CD8-positive, alpha-beta T cell (primary cell): ENCODE measurements at regions of chr13 and their contacts with region 1.

Region 1: DNA sequence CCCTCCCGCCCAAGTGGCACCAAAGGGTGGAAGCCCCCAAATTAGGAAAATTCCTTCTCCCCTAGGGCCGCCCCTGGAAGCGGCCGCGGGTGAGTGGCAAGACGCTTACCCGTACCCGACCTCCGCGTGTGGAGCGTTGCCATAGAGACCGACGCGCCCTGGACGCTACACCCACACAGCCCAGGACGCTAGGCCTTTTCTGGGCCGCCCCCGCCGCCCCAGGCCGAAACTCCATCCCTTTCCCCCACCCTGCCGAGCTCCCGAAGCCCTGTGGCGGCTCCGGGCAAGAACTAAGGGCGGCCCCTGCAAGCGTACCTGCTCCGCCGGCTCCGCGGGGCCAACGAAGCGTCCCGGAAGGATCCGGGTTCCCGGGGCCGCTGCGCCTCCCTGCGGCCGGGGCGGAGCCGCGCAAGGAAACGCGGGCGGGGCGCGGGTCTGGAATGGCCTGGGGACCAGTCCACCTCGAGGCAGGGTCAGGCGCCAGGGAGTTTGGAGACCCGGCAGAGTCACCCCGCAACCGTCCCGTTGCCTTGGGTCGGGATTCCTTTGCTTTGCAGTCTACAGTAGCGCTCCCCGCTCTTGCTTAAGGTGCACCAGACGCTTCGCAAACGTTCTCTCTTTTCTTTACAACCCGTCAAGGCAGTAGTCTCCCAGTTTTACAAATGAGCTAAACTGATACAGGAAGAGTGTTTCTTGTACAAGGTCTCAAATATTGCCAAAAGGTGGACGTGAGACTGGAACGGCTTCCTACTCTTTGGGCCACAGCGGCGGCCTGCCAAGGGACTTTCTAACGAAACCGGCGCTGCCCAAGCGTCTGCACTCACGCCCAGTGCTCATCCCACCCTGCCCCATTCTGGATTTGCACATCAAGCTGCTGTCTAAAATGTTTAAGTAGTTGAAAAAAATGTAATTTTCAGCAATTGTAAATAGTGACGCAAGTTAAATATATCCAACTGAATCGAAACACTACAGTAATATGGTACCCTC is at the start of gene NEK5:
- DNase-seq: peak; percentile 6 to 69 (median 48)
- ATAC-seq: peak; percentile 83
- H3K4me3 ChIP-seq: peak within 1 kb of the TSS; percentile 62 to 66
- H3K4me3 Mint-ChIP-seq: peak within 1 kb of the TSS; percentile 83
- H3K27ac ChIP-seq: no peak within 1 kb of the TSS
- H3K27ac Mint-ChIP-seq: no peak within 1 kb of the TSS
- H3K4me1 ChIP-seq: peaks cover 16% of the 10 kb centered on the region
- H3K4me1 Mint-ChIP-seq: peaks cover 16% of the 10 kb centered on the region
- H3K27me3 ChIP-seq: peaks cover 5 to 11% of the 10 kb centered on the region in 2 experiments
- H3K27me3 Mint-ChIP-seq: peaks cover 16% of the 10 kb centered on the region
- CTCF ChIP-seq: peak; percentile 46
- total RNA-seq, gene NEK5: not detected

Region 2: GRCh38 chr13:51125498-51126226 is 1003.3 kb before region 1 on chr13:
- CTCF ChIA-PET with region 1: no interaction called
- POLR2A ChIA-PET with region 1: no interaction called
- intact Hi-C with region 1: loop called in 1 of 2 experiments (anchors 1 kb)
- DNase-seq: peak in 4 of 9 experiments; percentile 23 to 60 (median 39)
- ATAC-seq: peak; percentile 57
- H3K4me3 ChIP-seq: no peak overlapping the region
- H3K4me3 Mint-ChIP-seq: no peak overlapping the region
- H3K27ac ChIP-seq: no peak overlapping the region
- H3K27ac Mint-ChIP-seq: no peak overlapping the region
- H3K4me1 ChIP-seq: no peaks in the 10 kb centered on the region
- H3K4me1 Mint-ChIP-seq: peaks cover 3% of the 10 kb centered on the region
- H3K27me3 ChIP-seq: no peaks in the 10 kb centered on the region
- H3K27me3 Mint-ChIP-seq: peaks cover 14% of the 10 kb centered on the region
- CTCF ChIP-seq: peak; percentile 48

Region 3: DNA sequence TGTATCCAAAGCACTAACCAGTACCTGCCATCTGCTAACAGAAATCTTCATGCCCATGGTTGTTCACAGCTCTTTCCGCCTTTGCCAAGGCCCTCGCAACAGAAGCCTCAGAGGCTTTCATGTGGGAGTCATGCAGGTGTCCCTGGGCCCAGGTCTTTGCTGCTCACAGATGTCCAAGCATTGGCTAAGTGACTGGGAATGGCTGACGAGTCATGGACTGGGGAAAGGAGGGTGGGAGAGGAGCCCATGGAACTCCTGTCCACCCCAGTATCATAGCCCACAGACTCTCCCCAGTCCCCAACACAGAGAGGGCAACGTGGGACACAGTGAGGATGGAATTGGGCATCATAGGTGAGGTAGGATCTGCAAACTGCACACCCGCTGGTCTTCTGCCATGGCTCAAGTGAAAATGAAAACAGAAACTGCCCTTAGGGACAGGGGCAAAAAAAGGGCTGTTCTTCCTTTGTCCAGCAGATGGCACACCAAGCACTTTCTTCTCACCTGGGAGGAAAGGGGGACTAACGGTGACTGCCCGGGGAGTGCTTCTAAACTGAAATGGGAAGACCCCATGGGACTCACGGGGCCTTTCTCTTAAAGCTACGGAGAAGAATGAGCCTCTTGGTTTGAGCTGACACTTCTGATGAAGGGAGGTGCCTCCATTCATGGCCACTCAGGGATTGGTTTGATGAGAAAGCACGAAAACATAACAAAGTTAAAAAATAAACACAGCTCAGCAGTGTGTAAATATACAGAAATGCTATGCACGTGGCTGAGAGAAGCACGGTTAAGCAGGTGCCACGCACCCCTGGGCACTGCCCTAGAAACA is 314.0 kb before region 1 on chr13:
- CTCF ChIA-PET with region 1: interaction called, 4 read pairs
- POLR2A ChIA-PET with region 1: no interaction called
- intact Hi-C with region 1: loop called (anchors 2 kb)
- DNase-seq: peak; percentile 49 to 89 (median 76)
- ATAC-seq: peak; percentile 82
- H3K4me3 ChIP-seq: peak overlapping the region; percentile 12 to 23
- H3K4me3 Mint-ChIP-seq: peak overlapping the region; percentile 70
- H3K27ac ChIP-seq: peak overlapping the region in 1 of 2 experiments; percentile 18
- H3K27ac Mint-ChIP-seq: peak overlapping the region; percentile 92
- H3K4me1 ChIP-seq: peaks cover 63% of the 10 kb centered on the region
- H3K4me1 Mint-ChIP-seq: peaks cover 79% of the 10 kb centered on the region
- H3K27me3 ChIP-seq: no peaks in the 10 kb centered on the region
- H3K27me3 Mint-ChIP-seq: no peaks in the 10 kb centered on the region
- CTCF ChIP-seq: peak; percentile 92

Region 4: GRCh38 chr13:51844862-51845573 is 284.0 kb before region 1 on chr13 and contains the start of gene TMEM272:
- CTCF ChIA-PET with region 1: interaction called, 5 read pairs
- POLR2A ChIA-PET with region 1: no interaction called
- intact Hi-C with region 1: loop called (anchors 1 to 5 kb)
- DNase-seq: peak in 7 of 9 experiments; percentile 35 to 63 (median 54)
- ATAC-seq: peak; percentile 96
- H3K4me3 ChIP-seq: no peak within 1 kb of the TSS
- H3K4me3 Mint-ChIP-seq: peak within 1 kb of the TSS; percentile 53
- H3K27ac ChIP-seq: no peak within 1 kb of the TSS
- H3K27ac Mint-ChIP-seq: no peak within 1 kb of the TSS
- H3K4me1 ChIP-seq: peaks cover 5% of the 10 kb centered on the region
- H3K4me1 Mint-ChIP-seq: peaks cover 8% of the 10 kb centered on the region
- H3K27me3 ChIP-seq: no peaks in the 10 kb centered on the region
- H3K27me3 Mint-ChIP-seq: peaks cover 4% of the 10 kb centered on the region
- CTCF ChIP-seq: peak; percentile 83
- total RNA-seq, gene TMEM272: 1.1 to 1.7 TPM

Region 5: DNA sequence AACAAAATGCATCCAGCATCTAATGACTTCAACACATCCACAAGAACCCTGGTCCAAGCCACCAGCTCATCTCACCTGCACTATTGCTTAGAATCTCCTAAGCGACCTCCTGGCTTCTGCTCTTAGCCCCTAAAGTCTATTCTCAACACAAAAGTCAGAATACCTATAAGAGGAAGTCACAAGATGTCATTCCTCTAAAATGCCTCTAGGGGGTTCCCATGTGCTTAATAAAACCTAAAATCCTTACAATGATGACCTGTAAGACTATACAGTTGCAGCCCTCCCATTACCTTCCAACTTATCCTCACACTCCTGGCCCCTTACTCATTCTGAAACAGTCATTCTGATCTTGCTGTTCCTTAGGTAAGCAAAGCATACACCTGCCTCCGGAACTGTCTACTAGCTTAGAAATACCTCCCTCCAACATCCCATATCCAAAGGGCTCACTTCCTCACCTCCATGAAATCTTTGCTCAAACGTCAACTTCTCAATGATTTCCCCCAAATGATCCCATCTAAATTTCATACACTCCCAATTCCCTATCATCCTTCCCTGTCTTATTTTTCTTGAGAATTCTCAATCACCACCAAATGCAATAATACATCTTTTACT is 127.8 kb before region 1 on chr13:
- CTCF ChIA-PET with region 1: interaction called, 40 read pairs
- POLR2A ChIA-PET with region 1: no interaction called
- intact Hi-C with region 1: loop called (anchors 1 kb)
- DNase-seq: peak in 2 of 9 experiments; percentile 50 to 62
- ATAC-seq: peak; percentile 90
- H3K4me3 ChIP-seq: no peak overlapping the region
- H3K4me3 Mint-ChIP-seq: no peak overlapping the region
- H3K27ac ChIP-seq: no peak overlapping the region
- H3K27ac Mint-ChIP-seq: no peak overlapping the region
- H3K4me1 ChIP-seq: no peaks in the 10 kb centered on the region
- H3K4me1 Mint-ChIP-seq: no peaks in the 10 kb centered on the region
- H3K27me3 ChIP-seq: no peaks in the 10 kb centered on the region
- H3K27me3 Mint-ChIP-seq: peaks cover 18% of the 10 kb centered on the region
- CTCF ChIP-seq: peak; percentile 66

Region 6: DNA sequence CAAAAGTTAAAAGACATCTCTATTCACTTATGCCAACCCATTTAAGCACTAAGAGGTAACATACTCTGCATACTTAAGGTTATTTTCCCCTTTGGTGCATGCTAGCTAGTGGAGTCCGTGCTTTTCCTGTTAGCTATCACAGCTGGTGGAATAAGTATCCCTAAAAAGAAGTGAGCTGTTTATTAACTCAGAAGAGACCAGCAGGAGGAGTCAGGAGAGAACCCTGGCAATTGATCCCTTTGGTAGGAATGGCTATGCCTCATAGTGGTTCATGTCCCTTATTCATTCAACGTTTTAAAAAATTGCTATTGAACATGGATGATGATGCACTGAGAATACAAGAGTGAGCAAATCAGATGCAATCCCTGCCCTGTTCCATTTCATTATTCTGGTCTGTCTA is 12.3 kb after region 1 on chr13:
- CTCF ChIA-PET with region 1: interaction called, 28 read pairs
- POLR2A ChIA-PET with region 1: interaction called, 4 read pairs
- intact Hi-C with region 1: no loop called
- DNase-seq: no peak
- ATAC-seq: no peak
- H3K4me3 ChIP-seq: no peak overlapping the region
- H3K4me3 Mint-ChIP-seq: no peak overlapping the region
- H3K27ac ChIP-seq: no peak overlapping the region
- H3K27ac Mint-ChIP-seq: no peak overlapping the region
- H3K4me1 ChIP-seq: no peaks in the 10 kb centered on the region
- H3K4me1 Mint-ChIP-seq: no peaks in the 10 kb centered on the region
- H3K27me3 ChIP-seq: no peaks in the 10 kb centered on the region
- H3K27me3 Mint-ChIP-seq: no peaks in the 10 kb centered on the region
- CTCF ChIP-seq: no peak